ENCODE measurements at regions of chr19 and their contacts with region 1.

Region 1: DNA sequence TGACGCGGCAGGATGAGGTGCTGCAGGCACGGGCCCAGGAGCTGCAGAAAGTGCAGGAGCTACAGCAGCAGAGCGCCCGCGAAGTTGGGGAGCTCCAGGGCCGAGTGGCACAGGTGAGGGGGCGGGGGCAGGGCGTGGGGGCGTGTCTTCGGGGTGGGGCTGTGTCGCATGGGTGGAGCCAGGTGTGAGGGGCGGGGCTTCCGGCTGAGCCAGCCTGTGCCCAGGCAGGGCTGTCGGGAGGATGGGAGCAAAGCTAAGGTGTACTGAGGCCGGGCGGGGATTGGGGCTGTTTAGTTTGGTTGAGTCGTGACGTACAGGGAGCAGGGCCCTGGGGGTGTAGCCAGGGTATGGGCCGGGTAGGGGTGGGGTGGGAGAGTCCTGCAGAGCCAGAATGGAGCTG is 62.3 kb downstream of the KCNC3 start:
- DNase-seq: peak; percentile 47
- ATAC-seq: peak; percentile 100
- H3K4me3 ChIP-seq: no peak overlapping the region
- H3K27ac ChIP-seq: no peak overlapping the region
- H3K4me1 ChIP-seq: peaks cover 0 to 9% of the 10 kb centered on the region in 2 experiments; a peak in 2 of 4 replicates
- H3K27me3 ChIP-seq: no peaks in the 10 kb centered on the region
- CTCF ChIP-seq: no peak
- POLR2A ChIP-seq: no peak
- RAD21 ChIP-seq: no peak

Region 2: GRCh38 chr19:50252111-50252886 is 14.6 kb before region 1 on chr19:
- CTCF ChIA-PET with region 1: interaction called, 10 read pairs
- POLR2A ChIA-PET with region 1: no interaction called
- RAD21 ChIA-PET with region 1: no interaction called
- intact Hi-C with region 1: no loop called
- DNase-seq: no peak
- ATAC-seq: peak; percentile 62; the same call in 1 of the 2 replicates
- H3K4me3 ChIP-seq: no peak overlapping the region
- H3K27ac ChIP-seq: no peak overlapping the region
- H3K4me1 ChIP-seq: no peaks in the 10 kb centered on the region
- H3K27me3 ChIP-seq: no peaks in the 10 kb centered on the region
- CTCF ChIP-seq: peak in 2 of 3 experiments; percentile 87 to 88; a peak in 4 of 6 replicates
- POLR2A ChIP-seq: no peak
- RAD21 ChIP-seq: peak; percentile 38; the same call in 1 of the 2 replicates

Measured in HCT116 (cell line).